ENCODE measurements at regions of chr9 and their contacts with region 1.

Region 1: GRCh38 chr9:3962971-3963642 is 336.8 kb downstream of the GLIS3 start:
- DNase-seq: no peak
- ATAC-seq: no peak
- H3K4me3 ChIP-seq: no peak overlapping the region
- H3K4me3 Mint-ChIP-seq: no peak overlapping the region
- H3K27ac ChIP-seq: no peak overlapping the region
- H3K27ac Mint-ChIP-seq: no peak overlapping the region
- H3K4me1 ChIP-seq: no peaks in the 10 kb centered on the region
- H3K4me1 Mint-ChIP-seq: no peaks in the 10 kb centered on the region
- H3K27me3 ChIP-seq: no peaks in the 10 kb centered on the region
- H3K27me3 Mint-ChIP-seq: peaks cover 0 to 19% (median 4%) of the 10 kb centered on the region in 5 donors

Region 2: GRCh38 chr9:3760031-3760430 is 203.1 kb before region 1 on chr9:
- CTCF ChIA-PET with region 1: no interaction called
- POLR2A ChIA-PET with region 1: no interaction called
- intact Hi-C with region 1: no loop called
- DNase-seq: no peak
- ATAC-seq: no peak
- H3K4me3 ChIP-seq: no peak overlapping the region
- H3K4me3 Mint-ChIP-seq: no peak overlapping the region
- H3K27ac ChIP-seq: no peak overlapping the region
- H3K27ac Mint-ChIP-seq: no peak overlapping the region
- H3K4me1 ChIP-seq: no peaks in the 10 kb centered on the region
- H3K4me1 Mint-ChIP-seq: peaks cover 10 to 16% (median 13%) of the 10 kb centered on the region in 7 donors
- H3K27me3 ChIP-seq: no peaks in the 10 kb centered on the region
- H3K27me3 Mint-ChIP-seq: peaks cover 0 to 9% (median 0%) of the 10 kb centered on the region in 5 donors

Region 3: DNA sequence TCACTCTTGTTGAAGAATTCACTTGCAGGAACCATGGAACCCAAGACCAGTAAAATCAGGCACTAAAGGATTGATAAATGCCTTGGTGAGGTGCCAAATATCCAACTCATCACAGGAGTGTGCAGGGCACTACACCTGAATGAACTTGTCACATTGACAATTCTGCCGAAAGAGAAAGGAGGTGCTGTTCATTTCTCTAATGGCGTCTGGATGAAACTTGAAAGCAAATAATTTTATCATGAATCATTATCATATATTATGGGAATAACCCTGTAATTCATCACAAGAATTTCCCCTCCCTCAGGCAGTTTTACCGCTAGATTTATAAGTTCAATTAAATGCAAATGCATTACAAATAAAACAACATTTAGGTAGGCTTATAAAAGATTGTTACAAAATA is 23.3 kb before region 1 on chr9:
- CTCF ChIA-PET with region 1: no interaction called
- POLR2A ChIA-PET with region 1: no interaction called
- intact Hi-C with region 1: loop called in 1 of 2 experiments (anchors 2 kb)
- DNase-seq: no peak
- ATAC-seq: no peak
- H3K4me3 ChIP-seq: no peak overlapping the region
- H3K4me3 Mint-ChIP-seq: no peak overlapping the region
- H3K27ac ChIP-seq: no peak overlapping the region
- H3K27ac Mint-ChIP-seq: no peak overlapping the region
- H3K4me1 ChIP-seq: no peaks in the 10 kb centered on the region
- H3K4me1 Mint-ChIP-seq: no peaks in the 10 kb centered on the region
- H3K27me3 ChIP-seq: no peaks in the 10 kb centered on the region
- H3K27me3 Mint-ChIP-seq: peaks cover 0 to 10% (median 0%) of the 10 kb centered on the region in 5 donors

Region 4: DNA sequence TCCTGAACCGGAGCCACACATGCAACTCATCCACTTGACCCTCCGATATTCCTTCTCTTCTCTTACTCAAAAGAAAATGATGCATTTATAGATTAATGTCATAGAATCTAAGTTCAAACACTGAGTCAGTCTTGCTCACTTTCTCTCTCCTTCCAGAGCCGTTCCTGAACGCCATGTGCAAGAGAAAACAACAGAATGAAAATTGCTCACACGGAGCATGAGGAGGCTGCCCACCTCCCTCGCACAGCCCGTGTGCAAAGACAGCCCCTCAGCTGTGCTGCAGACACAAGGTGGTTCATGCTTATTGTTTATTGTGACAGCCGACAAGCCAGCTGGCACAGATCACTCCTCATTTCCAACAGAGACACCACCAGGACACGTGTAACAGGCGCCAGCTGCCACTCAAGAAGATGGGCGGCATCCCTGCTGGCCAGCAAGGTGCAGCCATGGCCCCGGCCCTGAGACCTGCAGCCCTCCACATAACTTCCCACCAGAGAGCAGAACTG is 46.0 kb after region 1 on chr9:
- CTCF ChIA-PET with region 1: no interaction called
- POLR2A ChIA-PET with region 1: no interaction called
- intact Hi-C with region 1: no loop called
- DNase-seq: no peak
- ATAC-seq: no peak
- H3K4me3 ChIP-seq: no peak overlapping the region
- H3K4me3 Mint-ChIP-seq: no peak overlapping the region
- H3K27ac ChIP-seq: no peak overlapping the region
- H3K27ac Mint-ChIP-seq: no peak overlapping the region
- H3K4me1 ChIP-seq: no peaks in the 10 kb centered on the region
- H3K4me1 Mint-ChIP-seq: no peaks in the 10 kb centered on the region
- H3K27me3 ChIP-seq: no peaks in the 10 kb centered on the region
- H3K27me3 Mint-ChIP-seq: peaks cover 0 to 6% (median 0%) of the 10 kb centered on the region in 5 donors